ENCODE measurements at regions of chr19 and their contacts with region 1.

Region 1: DNA sequence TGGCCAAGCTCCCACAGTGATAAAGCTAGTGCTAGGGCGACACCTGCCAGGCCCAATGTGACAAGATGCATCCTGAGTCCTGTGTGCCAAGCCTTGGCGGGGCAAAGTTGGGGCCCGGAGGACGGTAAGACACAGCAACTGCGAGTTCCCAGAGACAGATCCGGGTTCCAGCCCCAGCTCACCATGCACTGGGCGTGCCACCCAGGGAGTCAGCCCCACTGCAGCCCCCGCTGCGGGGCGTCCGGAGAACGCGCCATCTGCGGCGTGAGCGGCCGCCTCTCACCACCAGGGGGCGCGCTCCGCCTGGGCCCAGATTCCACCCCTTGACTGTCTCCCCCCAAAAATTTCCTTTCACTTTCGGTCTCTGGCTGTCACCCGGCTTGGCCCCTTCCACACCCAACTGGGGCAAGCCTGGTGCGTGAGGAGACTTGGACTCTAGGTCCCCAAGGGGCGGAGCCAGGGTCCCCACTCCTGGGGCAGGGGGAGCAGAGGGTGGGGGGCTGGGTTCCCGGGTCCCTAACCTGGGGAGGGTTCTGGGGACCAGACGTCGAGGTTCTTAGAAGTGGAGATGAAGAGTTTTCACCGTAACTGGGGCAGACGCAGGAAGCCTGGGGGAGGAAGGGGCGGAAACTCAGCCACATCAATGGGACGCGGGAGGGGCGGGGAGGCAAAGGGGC is at the start of gene FLT3LG:
- DNase-seq: peak; percentile 93
- H3K4me3 Mint-ChIP-seq: peak within 1 kb of the TSS; percentile 88
- H3K27ac Mint-ChIP-seq: peak within 1 kb of the TSS; percentile 92
- H3K4me1 Mint-ChIP-seq: peaks cover 53% of the 10 kb centered on the region
- H3K27me3 Mint-ChIP-seq: no peaks in the 10 kb centered on the region
- total RNA-seq, gene FLT3LG: 50.1 to 51.0 TPM

Region 2: DNA sequence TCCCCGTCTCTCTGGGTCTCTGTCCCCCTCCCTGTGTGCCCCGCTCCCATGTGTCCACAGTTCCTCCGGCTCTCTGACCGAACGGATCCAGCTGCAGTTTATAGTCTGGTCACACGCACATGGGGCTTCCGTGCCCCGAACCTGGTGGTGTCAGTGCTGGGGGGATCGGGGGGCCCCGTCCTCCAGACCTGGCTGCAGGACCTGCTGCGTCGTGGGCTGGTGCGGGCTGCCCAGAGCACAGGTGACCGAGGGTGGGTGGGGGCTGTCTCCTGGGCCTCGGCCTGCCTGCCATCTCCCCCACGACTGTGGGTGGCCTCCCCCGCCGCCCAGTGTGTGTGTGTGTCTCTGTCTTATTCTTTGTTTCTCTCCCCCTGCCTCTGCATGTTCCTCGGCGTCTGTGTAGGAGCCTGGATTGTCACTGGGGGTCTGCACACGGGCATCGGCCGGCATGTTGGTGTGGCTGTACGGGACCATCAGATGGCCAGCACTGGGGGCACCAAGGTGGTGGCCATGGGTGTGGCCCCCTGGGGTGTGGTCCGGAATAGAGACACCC is 306.1 kb before region 1 on chr19:
- CTCF ChIA-PET with region 1: no interaction called
- POLR2A ChIA-PET with region 1: no interaction called
- intact Hi-C with region 1: no loop called
- DNase-seq: no peak
- H3K4me3 Mint-ChIP-seq: no peak overlapping the region
- H3K27ac Mint-ChIP-seq: no peak overlapping the region
- H3K4me1 Mint-ChIP-seq: no peaks in the 10 kb centered on the region
- H3K27me3 Mint-ChIP-seq: peaks cover 6% of the 10 kb centered on the region

Region 3: GRCh38 chr19:49224856-49225255 is 249.2 kb before region 1 on chr19:
- CTCF ChIA-PET with region 1: interaction called, 4 read pairs
- POLR2A ChIA-PET with region 1: no interaction called
- intact Hi-C with region 1: loop called (anchors 10 kb)
- DNase-seq: peak; percentile 67
- H3K4me3 Mint-ChIP-seq: no peak overlapping the region
- H3K27ac Mint-ChIP-seq: peak overlapping the region; percentile 18
- H3K4me1 Mint-ChIP-seq: peaks cover 2% of the 10 kb centered on the region
- H3K27me3 Mint-ChIP-seq: peaks cover 11% of the 10 kb centered on the region

Region 4: DNA sequence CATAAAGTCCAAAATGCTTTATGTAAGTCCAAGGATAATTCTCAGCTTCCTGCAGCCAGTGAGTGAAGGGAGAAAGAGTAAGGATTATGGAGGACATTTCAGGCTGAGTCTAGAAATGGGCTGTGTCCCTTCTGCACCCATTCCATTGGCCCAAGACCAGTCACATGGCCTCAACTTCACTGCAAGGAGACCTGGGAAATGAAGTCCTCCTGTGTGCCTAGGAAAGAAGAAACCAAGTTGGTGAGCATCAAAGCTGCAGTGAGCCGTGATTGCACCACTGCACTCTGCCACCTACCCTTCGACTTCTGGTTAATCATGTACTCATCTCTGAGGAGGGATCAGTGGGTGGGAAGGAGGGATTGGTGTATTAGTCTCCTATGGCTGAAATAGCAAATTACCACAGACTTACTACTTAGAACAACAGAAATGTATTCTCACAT is 142.4 kb before region 1 on chr19:
- CTCF ChIA-PET with region 1: interaction called, 4 read pairs
- POLR2A ChIA-PET with region 1: interaction called, 3 read pairs
- intact Hi-C with region 1: loop called (anchors 5 kb)
- DNase-seq: peak; percentile 80
- H3K4me3 Mint-ChIP-seq: peak overlapping the region; percentile 43
- H3K27ac Mint-ChIP-seq: peak overlapping the region; percentile 99
- H3K4me1 Mint-ChIP-seq: peaks cover 69% of the 10 kb centered on the region
- H3K27me3 Mint-ChIP-seq: no peaks in the 10 kb centered on the region

Region 5: GRCh38 chr19:49451430-49452181 is 22.4 kb before region 1 on chr19 and contains the start of gene PIH1D1:
- CTCF ChIA-PET with region 1: interaction called, 29 read pairs
- POLR2A ChIA-PET with region 1: interaction called, 52 read pairs
- intact Hi-C with region 1: loop called (anchors 1 kb)
- DNase-seq: peak; percentile 98
- H3K4me3 Mint-ChIP-seq: peak within 1 kb of the TSS; percentile 100
- H3K27ac Mint-ChIP-seq: peak within 1 kb of the TSS; percentile 99
- H3K4me1 Mint-ChIP-seq: peaks cover 38% of the 10 kb centered on the region
- H3K27me3 Mint-ChIP-seq: no peaks in the 10 kb centered on the region
- total RNA-seq, gene PIH1D1: 117 to 129 TPM

Region 6: GRCh38 chr19:49497047-49497788 is 23.2 kb after region 1 on chr19:
- CTCF ChIA-PET with region 1: interaction called, 8 read pairs
- POLR2A ChIA-PET with region 1: interaction called, 5 read pairs
- intact Hi-C with region 1: loop called (anchors 1 kb)
- DNase-seq: peak; percentile 83
- H3K4me3 Mint-ChIP-seq: peak overlapping the region; percentile 92
- H3K27ac Mint-ChIP-seq: peak overlapping the region; percentile 97
- H3K4me1 Mint-ChIP-seq: peaks cover 49% of the 10 kb centered on the region
- H3K27me3 Mint-ChIP-seq: no peaks in the 10 kb centered on the region

Region 7: DNA sequence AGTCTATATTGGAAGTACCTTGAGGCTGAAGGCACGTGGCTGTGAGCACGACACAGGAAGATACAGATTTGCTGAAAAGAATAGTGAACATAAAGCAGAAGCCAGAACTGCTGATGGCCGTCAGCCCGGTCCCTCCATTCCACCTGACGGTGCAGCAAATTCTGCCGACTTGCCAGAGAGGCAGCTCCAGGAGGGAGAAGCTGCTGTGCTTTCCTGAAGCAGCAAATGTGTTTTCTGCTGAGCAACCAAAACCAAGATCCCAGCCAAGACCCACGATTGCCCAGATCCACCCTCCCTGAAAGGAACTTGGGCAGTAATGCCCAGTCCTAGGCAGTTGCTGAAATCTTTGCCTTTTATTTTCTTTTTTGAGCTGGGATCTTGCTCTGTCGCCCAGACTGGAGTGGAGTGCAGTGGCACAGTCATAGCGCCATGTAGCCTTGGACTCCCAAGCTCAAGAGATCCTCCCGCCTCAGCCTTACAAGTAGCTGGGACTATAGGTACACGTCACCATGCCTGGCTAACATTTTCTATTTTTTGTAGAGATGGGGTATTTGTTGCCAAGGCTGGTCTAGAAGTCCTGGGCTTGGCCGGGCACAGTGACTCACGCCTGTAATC is 46.8 kb after region 1 on chr19:
- CTCF ChIA-PET with region 1: no interaction called
- POLR2A ChIA-PET with region 1: no interaction called
- intact Hi-C with region 1: no loop called
- DNase-seq: no peak
- H3K4me3 Mint-ChIP-seq: no peak overlapping the region
- H3K27ac Mint-ChIP-seq: no peak overlapping the region
- H3K4me1 Mint-ChIP-seq: peaks cover 1% of the 10 kb centered on the region
- H3K27me3 Mint-ChIP-seq: no peaks in the 10 kb centered on the region

Region 8: DNA sequence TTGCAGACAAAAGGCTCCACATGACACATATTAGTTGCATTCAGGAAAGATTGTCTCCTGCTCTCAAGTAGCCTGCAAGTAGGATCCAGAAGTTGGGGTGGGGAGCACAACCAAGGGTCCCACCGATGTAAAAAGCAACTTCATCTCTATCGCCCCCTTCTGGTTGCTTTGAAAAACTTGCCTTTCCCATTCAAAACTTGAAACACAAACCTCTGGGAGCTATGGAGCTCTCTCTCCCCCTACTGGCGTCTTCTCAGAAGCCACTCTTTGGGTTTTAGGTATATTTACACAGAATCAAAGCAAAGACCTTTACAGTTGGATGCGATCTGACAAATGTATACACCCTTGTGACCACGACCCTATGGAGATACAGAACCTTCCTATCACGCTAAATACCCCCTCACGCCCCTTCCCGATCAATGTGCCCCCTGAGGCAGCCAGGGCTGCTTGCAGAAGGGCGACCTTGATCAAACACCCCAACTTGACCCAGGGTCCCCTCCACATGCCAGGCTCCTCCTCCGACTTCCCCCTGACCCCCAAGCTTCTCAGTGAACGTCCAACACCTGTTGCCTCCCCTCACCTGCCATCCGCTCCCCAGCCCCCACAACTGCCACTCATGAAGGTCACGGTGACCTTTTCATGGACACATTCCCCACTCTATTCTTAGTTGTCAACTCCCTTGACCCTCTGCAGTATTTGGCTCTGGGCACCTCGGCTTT is 96.3 kb after region 1 on chr19:
- CTCF ChIA-PET with region 1: interaction called, 11 read pairs
- POLR2A ChIA-PET with region 1: no interaction called
- intact Hi-C with region 1: no loop called
- DNase-seq: peak; percentile 81
- H3K4me3 Mint-ChIP-seq: peak overlapping the region; percentile 37
- H3K27ac Mint-ChIP-seq: peak overlapping the region; percentile 85
- H3K4me1 Mint-ChIP-seq: peaks cover 47% of the 10 kb centered on the region
- H3K27me3 Mint-ChIP-seq: no peaks in the 10 kb centered on the region